Activated T-helper 1 cell treated with anti-CD3 and anti-CD28 coated beads, Interleukin-12 subunit alpha, Interleukin-12 subunit beta, Interleukin-2, Interleukin-4 antibody, amounts not matched to agents 30 ng/mL and 10 ng/mL and 1 ng/mL, durations not matched to agents 14 hours and 24 hours and 36 hours (primary cell): ENCODE measurements at regions of chr4 and their contacts with region 1.

Region 1: GRCh38 chr4:142353149-142353738 is 492.9 kb downstream of the INPP4B start:
- DNase-seq: no peak
- H3K4me3 Mint-ChIP-seq: peak overlapping the region; percentile 42
- H3K27ac Mint-ChIP-seq: no peak overlapping the region
- H3K4me1 Mint-ChIP-seq: peaks cover 78% of the 10 kb centered on the region
- H3K27me3 Mint-ChIP-seq: no peaks in the 10 kb centered on the region

Region 2: DNA sequence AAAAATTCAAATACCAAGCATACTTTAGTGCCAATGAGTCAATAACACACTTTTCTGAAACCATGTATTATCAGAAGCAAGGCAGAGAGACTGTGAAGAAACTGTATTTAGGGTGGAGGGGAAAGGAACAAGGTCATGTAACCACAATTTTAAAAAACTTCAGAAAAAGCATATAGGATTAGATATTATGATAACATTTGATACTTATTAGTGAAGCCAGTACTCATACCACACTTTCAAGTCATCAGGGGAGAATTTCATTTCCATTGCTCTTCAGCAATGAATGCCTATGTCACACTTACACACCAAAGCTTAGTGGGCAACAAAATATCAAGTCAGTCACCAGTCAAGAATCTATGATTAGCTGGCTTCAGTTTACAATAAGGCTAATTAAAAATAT is 114.7 kb before region 1 on chr4:
- intact Hi-C with region 1: no loop called
- DNase-seq: no peak
- H3K4me3 Mint-ChIP-seq: no peak overlapping the region
- H3K27ac Mint-ChIP-seq: no peak overlapping the region
- H3K4me1 Mint-ChIP-seq: no peaks in the 10 kb centered on the region
- H3K27me3 Mint-ChIP-seq: no peaks in the 10 kb centered on the region

Region 3: GRCh38 chr4:142416711-142417275 is 63.5 kb after region 1 on chr4:
- intact Hi-C with region 1: loop called (anchors 1 kb)
- DNase-seq: no peak
- H3K4me3 Mint-ChIP-seq: peak overlapping the region; percentile 50
- H3K27ac Mint-ChIP-seq: peak overlapping the region; percentile 91
- H3K4me1 Mint-ChIP-seq: peaks cover 33% of the 10 kb centered on the region
- H3K27me3 Mint-ChIP-seq: no peaks in the 10 kb centered on the region

Region 4: GRCh38 chr4:142474335-142475087 is 121.3 kb after region 1 on chr4:
- intact Hi-C with region 1: no loop called
- DNase-seq: no peak
- H3K4me3 Mint-ChIP-seq: no peak overlapping the region
- H3K27ac Mint-ChIP-seq: no peak overlapping the region
- H3K4me1 Mint-ChIP-seq: peaks cover 15% of the 10 kb centered on the region
- H3K27me3 Mint-ChIP-seq: no peaks in the 10 kb centered on the region

Region 5: GRCh38 chr4:142549726-142550463 is 196.7 kb after region 1 on chr4:
- intact Hi-C with region 1: loop called (anchors 1 kb)
- DNase-seq: no peak
- H3K4me3 Mint-ChIP-seq: no peak overlapping the region
- H3K27ac Mint-ChIP-seq: peak overlapping the region; percentile 10
- H3K4me1 Mint-ChIP-seq: peaks cover 41% of the 10 kb centered on the region
- H3K27me3 Mint-ChIP-seq: no peaks in the 10 kb centered on the region

Region 6: GRCh38 chr4:142719854-142720541 is 366.8 kb after region 1 on chr4:
- intact Hi-C with region 1: loop called (anchors 1 kb)
- DNase-seq: no peak
- H3K4me3 Mint-ChIP-seq: no peak overlapping the region
- H3K27ac Mint-ChIP-seq: no peak overlapping the region
- H3K4me1 Mint-ChIP-seq: peaks cover 7% of the 10 kb centered on the region
- H3K27me3 Mint-ChIP-seq: no peaks in the 10 kb centered on the region

Region 7: GRCh38 chr4:142817442-142817841 is 464.2 kb after region 1 on chr4:
- intact Hi-C with region 1: loop called (anchors 5 kb)
- DNase-seq: no peak
- H3K4me3 Mint-ChIP-seq: peak overlapping the region; percentile 6
- H3K27ac Mint-ChIP-seq: peak overlapping the region; percentile 61
- H3K4me1 Mint-ChIP-seq: peaks cover 21% of the 10 kb centered on the region
- H3K27me3 Mint-ChIP-seq: no peaks in the 10 kb centered on the region